ENCODE measurements at regions of chr11 and their contacts with region 1.

Region 1: GRCh38 chr11:72752088-72752914 is at the start of gene ARAP1:
- DNase-seq: peak; percentile 74
- H3K4me3 Mint-ChIP-seq: peak within 1 kb of the TSS; percentile 89
- H3K27ac Mint-ChIP-seq: peak within 1 kb of the TSS; percentile 74
- H3K4me1 Mint-ChIP-seq: peaks cover 42% of the 10 kb centered on the region
- H3K27me3 Mint-ChIP-seq: no peaks in the 10 kb centered on the region
- total RNA-seq, gene ARAP1: 64.7 to 70.1 TPM

Region 2: DNA sequence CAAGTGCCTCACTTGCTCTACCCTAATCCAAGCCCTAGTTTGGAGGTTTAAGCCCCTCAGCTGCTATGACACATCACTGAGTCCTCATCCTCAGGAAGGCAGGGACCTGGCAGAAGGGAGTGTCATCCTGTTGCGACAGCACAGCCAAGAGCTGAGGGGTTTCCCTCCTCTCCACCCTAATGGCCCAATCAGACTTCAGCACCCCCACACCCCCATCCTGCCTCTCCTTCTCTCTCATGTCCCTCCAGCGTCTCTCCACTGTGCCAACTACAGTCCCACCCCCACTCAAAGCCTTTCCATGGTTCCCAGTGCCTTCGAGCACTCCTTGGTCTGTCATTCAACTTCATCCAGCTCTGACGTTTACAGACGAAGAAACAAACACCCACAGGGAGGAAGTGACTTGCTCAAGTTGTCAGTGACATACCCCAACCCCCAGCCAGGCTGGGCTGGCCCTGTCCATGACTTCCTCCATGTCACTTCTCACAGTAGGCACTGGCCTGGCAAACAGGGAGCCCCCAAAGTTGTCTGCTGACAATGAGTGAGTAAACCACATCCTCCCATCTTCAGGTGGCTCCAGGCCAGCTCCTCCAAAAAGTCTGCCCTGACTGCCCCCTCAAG is 15.7 kb before region 1 on chr11:
- CTCF ChIA-PET with region 1: no interaction called
- intact Hi-C with region 1: loop called (anchors 1 kb)
- DNase-seq: peak; percentile 89
- H3K4me3 Mint-ChIP-seq: peak overlapping the region; percentile 53
- H3K27ac Mint-ChIP-seq: peak overlapping the region; percentile 90
- H3K4me1 Mint-ChIP-seq: peaks cover 53% of the 10 kb centered on the region
- H3K27me3 Mint-ChIP-seq: no peaks in the 10 kb centered on the region

Region 3: GRCh38 chr11:72821883-72822799 is 69.8 kb after region 1 on chr11:
- CTCF ChIA-PET with region 1: no interaction called
- intact Hi-C with region 1: no loop called
- DNase-seq: peak; percentile 83
- H3K4me3 Mint-ChIP-seq: peak overlapping the region; percentile 46
- H3K27ac Mint-ChIP-seq: no peak overlapping the region
- H3K4me1 Mint-ChIP-seq: peaks cover 11% of the 10 kb centered on the region
- H3K27me3 Mint-ChIP-seq: no peaks in the 10 kb centered on the region

Measured in activated naive CD4-positive, alpha-beta T cell treated with anti-CD3 and anti-CD28 coated beads for 36 hours (primary cell).